ENCODE measurements at regions of chr11 and their contacts with region 1.

Region 1: DNA sequence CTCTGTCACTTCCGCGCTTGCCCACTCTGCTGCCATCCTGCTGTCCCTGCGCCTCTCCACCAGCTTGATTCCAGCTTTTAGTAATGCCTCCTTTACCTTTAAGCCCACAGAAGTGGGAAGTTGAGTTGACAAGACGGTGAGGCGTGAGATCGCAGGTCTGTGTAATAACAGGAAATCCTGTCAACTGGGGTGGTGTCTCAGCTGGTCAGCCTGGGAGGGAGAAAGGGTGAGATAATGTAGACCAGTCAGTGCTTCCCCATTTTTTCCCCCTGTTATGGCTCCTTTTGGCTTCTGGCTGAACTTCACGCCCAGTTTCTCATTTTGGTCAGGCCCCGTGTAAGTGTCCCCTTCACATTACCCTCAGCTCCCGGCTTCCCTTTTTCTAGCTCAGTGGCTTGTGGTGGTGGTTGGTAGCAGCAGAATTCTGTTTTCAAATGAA is 98.9 kb downstream of the TRAF6 start:
- DNase-seq: no peak
- H3K4me3 ChIP-seq: no peak overlapping the region
- H3K4me3 Mint-ChIP-seq: peak overlapping the region; percentile 29 to 87 (median 72)
- H3K27ac ChIP-seq: peak overlapping the region; percentile 48
- H3K27ac Mint-ChIP-seq: peak overlapping the region; percentile 74 to 95 (median 89)
- H3K4me1 ChIP-seq: peaks cover 70% of the 10 kb centered on the region
- H3K4me1 Mint-ChIP-seq: peaks cover 53 to 79% (median 61%) of the 10 kb centered on the region in 4 donors
- H3K27me3 ChIP-seq: no peaks in the 10 kb centered on the region
- H3K27me3 Mint-ChIP-seq: no peaks in the 10 kb centered on the region

Region 2: DNA sequence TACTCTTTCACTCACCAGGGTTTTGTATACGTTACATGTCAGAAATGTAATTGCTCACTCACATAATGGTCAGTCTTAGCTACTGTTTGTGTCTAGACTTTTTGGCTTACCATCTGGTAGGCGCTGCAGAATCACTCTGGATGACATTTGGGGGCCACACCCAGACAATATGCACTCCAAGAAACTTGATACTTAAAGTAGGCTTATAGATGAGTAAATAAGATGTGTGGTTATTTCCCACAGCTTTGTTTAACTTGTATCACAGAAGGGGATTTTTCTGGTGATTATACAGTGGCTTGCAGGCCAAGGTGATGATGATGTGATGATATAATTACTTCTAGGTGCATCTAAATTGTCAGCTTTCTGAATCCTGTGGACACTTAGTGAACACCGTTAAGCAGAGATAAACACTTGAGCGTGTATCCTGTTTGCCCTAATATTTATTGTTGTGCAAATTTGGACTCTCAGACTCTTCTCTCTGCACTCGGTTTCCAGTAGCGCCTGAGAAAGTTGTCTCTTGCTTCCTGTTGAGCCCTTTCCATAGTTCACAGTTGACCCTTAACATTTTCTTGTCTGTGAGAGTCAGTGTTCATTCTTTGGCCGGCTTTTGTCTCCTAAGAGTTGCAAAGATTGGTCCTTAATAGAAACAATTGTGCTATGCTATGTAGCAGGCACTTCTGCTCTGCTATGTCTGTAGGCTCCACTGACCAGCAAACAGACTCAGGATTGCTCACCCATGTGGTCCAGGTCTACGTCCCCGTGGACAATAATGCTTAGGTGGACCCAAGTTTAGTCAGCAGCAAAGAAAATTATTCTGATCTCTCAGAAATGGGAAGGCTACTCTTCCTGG is 25.9 kb before region 1 on chr11:
- CTCF ChIA-PET with region 1: interaction called, 3 read pairs
- POLR2A ChIA-PET with region 1: interaction called, 17 read pairs
- intact Hi-C with region 1: no loop called
- DNase-seq: peak in 4 of 5 donors; percentile 31 to 74 (median 44)
- H3K4me3 ChIP-seq: no peak overlapping the region
- H3K4me3 Mint-ChIP-seq: peak overlapping the region in 5 of 8 donors; percentile 11 to 65 (median 22)
- H3K27ac ChIP-seq: peak overlapping the region; percentile 42
- H3K27ac Mint-ChIP-seq: peak overlapping the region; percentile 53 to 95 (median 79)
- H3K4me1 ChIP-seq: peaks cover 46% of the 10 kb centered on the region
- H3K4me1 Mint-ChIP-seq: peaks cover 28 to 84% (median 60%) of the 10 kb centered on the region in 4 donors
- H3K27me3 ChIP-seq: no peaks in the 10 kb centered on the region
- H3K27me3 Mint-ChIP-seq: peaks cover 0 to 1% of the 10 kb centered on the region in 2 donors

Region 3: DNA sequence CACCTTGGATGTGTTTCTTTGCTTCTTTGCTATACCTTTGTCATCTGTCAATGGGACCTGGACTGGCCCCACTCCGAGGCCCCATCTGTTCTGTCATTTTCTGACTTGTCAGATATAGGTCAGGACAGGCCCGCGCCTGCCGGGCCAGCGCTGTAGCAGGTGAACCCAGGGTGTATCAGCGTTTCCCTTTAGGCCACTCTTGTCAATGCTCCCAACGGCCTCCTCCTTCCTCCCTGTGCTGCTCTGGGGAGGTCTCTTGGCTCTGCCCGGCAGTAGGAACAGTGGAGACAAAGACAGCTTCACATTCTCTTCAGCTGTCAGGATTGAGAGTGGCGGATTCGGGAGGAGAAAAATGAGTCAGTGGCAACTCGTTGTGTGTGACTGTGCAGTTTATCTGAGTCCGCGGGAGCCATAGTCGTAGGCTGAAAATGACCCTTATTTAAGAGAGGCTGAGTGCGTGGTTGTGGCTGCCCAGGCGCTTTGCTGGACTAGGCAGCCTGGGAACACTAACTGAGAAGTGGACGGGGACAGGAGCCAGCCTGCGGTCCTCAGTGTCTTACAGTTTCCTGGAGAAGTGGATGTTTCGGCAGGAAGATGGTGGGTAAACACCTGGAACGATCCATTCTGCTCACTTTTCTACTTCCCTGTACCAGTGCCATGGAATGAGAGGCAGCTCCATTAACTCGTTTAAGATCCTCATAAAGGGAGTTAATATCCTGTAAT is 12.8 kb before region 1 on chr11:
- CTCF ChIA-PET with region 1: interaction called, 3 read pairs
- POLR2A ChIA-PET with region 1: interaction called, 22 read pairs
- intact Hi-C with region 1: no loop called
- DNase-seq: no peak
- H3K4me3 ChIP-seq: no peak overlapping the region
- H3K4me3 Mint-ChIP-seq: no peak overlapping the region
- H3K27ac ChIP-seq: no peak overlapping the region
- H3K27ac Mint-ChIP-seq: peak overlapping the region in 3 of 7 donors; percentile 21 to 37 (median 23)
- H3K4me1 ChIP-seq: peaks cover 47% of the 10 kb centered on the region
- H3K4me1 Mint-ChIP-seq: peaks cover 22 to 54% (median 39%) of the 10 kb centered on the region in 4 donors
- H3K27me3 ChIP-seq: no peaks in the 10 kb centered on the region
- H3K27me3 Mint-ChIP-seq: no peaks in the 10 kb centered on the region

Measured in CD4-positive, alpha-beta memory T cell (primary cell).